Naive thymus-derived CD8-positive, alpha-beta T cell (primary cell): ENCODE measurements at regions of chr7 and their contacts with region 1.

Region 1: GRCh38 chr7:45136106-45137060 is 21.2 kb upstream of the RAMP3 start:
- DNase-seq: peak; percentile 40 to 83 (median 68)
- ATAC-seq: peak; percentile 83 to 96
- H3K4me3 Mint-ChIP-seq: no peak overlapping the region
- H3K27ac Mint-ChIP-seq: peak overlapping the region in 7 of 10 donors; percentile 7 to 82 (median 46)
- H3K4me1 Mint-ChIP-seq: peaks cover 6 to 15% (median 11%) of the 10 kb centered on the region in 4 donors
- H3K27me3 Mint-ChIP-seq: peaks cover 0 to 7% (median 0%) of the 10 kb centered on the region in 5 donors

Region 2: GRCh38 chr7:44973610-44974401 is 162.6 kb before region 1 on chr7:
- POLR2A ChIA-PET with region 1: interaction called, 16 read pairs
- DNase-seq: peak in 9 of 10 donors; percentile 43 to 80 (median 48)
- ATAC-seq: peak; percentile 26 to 28
- H3K4me3 Mint-ChIP-seq: peak overlapping the region in 1 of 10 donors; percentile 29
- H3K27ac Mint-ChIP-seq: peak overlapping the region in 9 of 10 donors; percentile 47 to 88 (median 77)
- H3K4me1 Mint-ChIP-seq: peaks cover 17 to 61% (median 49%) of the 10 kb centered on the region in 4 donors
- H3K27me3 Mint-ChIP-seq: no peaks in the 10 kb centered on the region

Region 3: GRCh38 chr7:44986218-44987053 is 149.9 kb before region 1 on chr7:
- POLR2A ChIA-PET with region 1: interaction called, 12 read pairs
- DNase-seq: peak; percentile 90 to 97 (median 94)
- ATAC-seq: peak; percentile 93 to 95
- H3K4me3 Mint-ChIP-seq: peak overlapping the region; percentile 93 to 99 (median 98)
- H3K27ac Mint-ChIP-seq: peak overlapping the region; percentile 95 to 100 (median 99)
- H3K4me1 Mint-ChIP-seq: peaks cover 27 to 61% (median 54%) of the 10 kb centered on the region in 4 donors
- H3K27me3 Mint-ChIP-seq: no peaks in the 10 kb centered on the region

Region 4: GRCh38 chr7:45073786-45074527 is 62.4 kb before region 1 on chr7:
- POLR2A ChIA-PET with region 1: no interaction called
- DNase-seq: no peak
- ATAC-seq: no peak
- H3K4me3 Mint-ChIP-seq: no peak overlapping the region
- H3K27ac Mint-ChIP-seq: peak overlapping the region in 6 of 10 donors; percentile 10 to 79 (median 50)
- H3K4me1 Mint-ChIP-seq: peaks cover 22 to 40% (median 37%) of the 10 kb centered on the region in 4 donors
- H3K27me3 Mint-ChIP-seq: no peaks in the 10 kb centered on the region

Region 5: DNA sequence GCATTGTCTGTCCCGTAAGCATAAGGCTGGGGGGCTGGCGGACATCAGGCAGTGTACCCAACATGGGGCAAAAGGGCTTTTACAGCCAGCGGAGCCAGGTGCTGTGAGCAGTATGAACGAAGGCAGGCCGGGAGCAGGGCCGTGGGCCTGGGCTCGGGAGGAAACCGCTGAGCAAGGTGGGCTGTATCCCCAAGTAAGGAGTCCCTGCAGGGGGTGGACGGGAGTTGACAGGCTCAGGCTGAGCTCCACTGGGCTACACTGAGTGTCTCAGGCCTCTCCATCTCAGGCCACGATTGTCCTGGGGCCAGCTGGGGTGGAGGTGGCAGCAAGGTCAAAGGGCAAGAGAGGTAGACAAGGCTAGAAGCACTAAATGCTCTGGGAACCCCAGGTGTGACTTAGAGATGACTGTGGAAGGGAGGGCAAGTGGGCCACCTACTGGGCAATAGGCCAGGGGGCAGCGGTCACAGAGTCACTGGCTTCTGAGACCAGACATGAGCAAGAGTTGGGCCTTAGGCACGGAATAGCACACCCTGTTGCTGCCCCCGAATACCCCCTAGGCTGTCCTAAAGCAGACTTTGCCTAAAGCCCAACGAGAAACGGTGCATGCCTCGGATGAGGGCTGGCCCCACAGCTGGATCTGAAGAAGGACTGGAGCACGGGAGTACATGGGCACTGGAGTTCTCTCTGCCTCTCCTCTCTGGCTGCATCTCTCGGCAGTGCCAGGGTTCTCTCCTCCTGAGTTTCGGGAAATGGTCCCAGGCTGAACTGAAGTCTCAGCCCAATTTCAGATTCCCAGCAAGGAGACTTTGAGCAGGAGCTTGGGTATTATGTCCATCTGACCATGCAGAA is 10.4 kb after region 1 on chr7:
- POLR2A ChIA-PET with region 1: no interaction called
- DNase-seq: no peak
- ATAC-seq: no peak
- H3K4me3 Mint-ChIP-seq: no peak overlapping the region
- H3K27ac Mint-ChIP-seq: no peak overlapping the region
- H3K4me1 Mint-ChIP-seq: no peaks in the 10 kb centered on the region
- H3K27me3 Mint-ChIP-seq: peaks cover 8 to 24% (median 16%) of the 10 kb centered on the region in 5 donors